ENCODE measurements at regions of chrX and their contacts with region 1.

Region 1: GRCh38 chrX:56281789-56282188 is 49.6 kb downstream of the KLF8 start:
- DNase-seq: peak; percentile 2
- ATAC-seq: no peak
- H3K4me3 ChIP-seq: no peak overlapping the region
- H3K27ac ChIP-seq: no peak overlapping the region
- H3K4me1 ChIP-seq: no peaks in the 10 kb centered on the region
- H3K27me3 ChIP-seq: no peaks in the 10 kb centered on the region
- CTCF ChIP-seq: peak; percentile 35; the same call in 1 of the 2 replicates

Region 2: DNA sequence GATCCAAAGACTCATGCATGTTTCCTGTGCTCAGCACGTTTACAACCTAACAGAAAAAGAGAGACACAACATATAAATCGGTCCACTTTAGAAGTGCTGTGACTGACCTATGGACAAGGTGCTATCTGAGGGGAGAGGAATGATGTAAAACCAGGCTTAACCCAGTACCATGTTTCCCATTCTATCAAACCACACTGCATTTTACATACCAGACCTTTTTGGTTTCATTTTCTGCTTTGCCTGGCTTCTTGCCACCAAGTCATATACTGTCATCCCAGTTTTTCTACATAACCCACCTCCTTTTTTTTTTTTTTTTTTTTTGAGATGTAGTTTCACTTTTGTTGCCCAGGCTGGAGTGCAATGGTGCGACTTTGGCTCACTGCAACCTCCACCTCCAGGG is 32.5 kb after region 1 on chrX:
- CTCF ChIA-PET with region 1: no interaction called
- POLR2A ChIA-PET with region 1: no interaction called
- in situ Hi-C with region 1: no loop called
- intact Hi-C with region 1: no loop called
- DNase-seq: no peak
- ATAC-seq: no peak
- H3K4me3 ChIP-seq: no peak overlapping the region
- H3K27ac ChIP-seq: no peak overlapping the region
- H3K4me1 ChIP-seq: no peaks in the 10 kb centered on the region
- H3K27me3 ChIP-seq: no peaks in the 10 kb centered on the region
- CTCF ChIP-seq: no peak

Region 3: GRCh38 chrX:56726605-56727004 is 444.8 kb after region 1 on chrX:
- CTCF ChIA-PET with region 1: interaction called, 3 read pairs
- POLR2A ChIA-PET with region 1: no interaction called
- in situ Hi-C with region 1: no loop called
- intact Hi-C with region 1: loop called (anchors 2 kb)
- DNase-seq: no peak
- ATAC-seq: no peak
- H3K4me3 ChIP-seq: no peak overlapping the region
- H3K27ac ChIP-seq: no peak overlapping the region
- H3K4me1 ChIP-seq: peaks cover 9% of the 10 kb centered on the region; the same call in 1 of the 2 replicates
- H3K27me3 ChIP-seq: no peaks in the 10 kb centered on the region
- CTCF ChIP-seq: peak; percentile 60; the same call in 1 of the 2 replicates